Vagina (tissue), 2 donors: ENCODE measurements at regions of chr4 and their contacts with region 1.

Region 1: GRCh38 chr4:77203380-77204197 is 46.6 kb downstream of the CCNG2 start:
- DNase-seq: no peak
- H3K4me3 ChIP-seq: no peak overlapping the region
- H3K27ac ChIP-seq: no peak overlapping the region
- H3K4me1 ChIP-seq: no peaks in the 10 kb centered on the region
- H3K27me3 ChIP-seq: no peaks in the 10 kb centered on the region
- CTCF ChIP-seq: peak; percentile 39 to 86 (median 75)
- POLR2A ChIP-seq: no peak

Region 2: GRCh38 chr4:76811604-76812412 is 391.8 kb before region 1 on chr4:
- intact Hi-C with region 1: no loop called
- DNase-seq: no peak
- H3K4me3 ChIP-seq: no peak overlapping the region
- H3K27ac ChIP-seq: peak overlapping the region; percentile 38
- H3K4me1 ChIP-seq: peaks cover 10% of the 10 kb centered on the region
- H3K27me3 ChIP-seq: no peaks in the 10 kb centered on the region
- CTCF ChIP-seq: no peak
- POLR2A ChIP-seq: no peak

Region 3: GRCh38 chr4:77104791-77105540 is 98.6 kb before region 1 on chr4:
- intact Hi-C with region 1: loop called (anchors 5 kb)
- DNase-seq: no peak
- H3K4me3 ChIP-seq: no peak overlapping the region
- H3K27ac ChIP-seq: peak overlapping the region; percentile 29
- H3K4me1 ChIP-seq: peaks cover 15% of the 10 kb centered on the region
- H3K27me3 ChIP-seq: no peaks in the 10 kb centered on the region
- CTCF ChIP-seq: no peak
- POLR2A ChIP-seq: no peak